Thyroid gland (tissue), 4 donors: ENCODE measurements at regions of chr12 and their contacts with region 1.

Region 1: GRCh38 chr12:91361864-91362263 is 179.2 kb upstream of the DCN start:
- DNase-seq: no peak
- H3K4me3 ChIP-seq: no peak overlapping the region
- H3K27ac ChIP-seq: no peak overlapping the region
- H3K4me1 ChIP-seq: no peaks in the 10 kb centered on the region
- H3K27me3 ChIP-seq: no peaks in the 10 kb centered on the region
- CTCF ChIP-seq: peak; percentile 39 to 70 (median 64)
- POLR2A ChIP-seq: no peak

Region 2: DNA sequence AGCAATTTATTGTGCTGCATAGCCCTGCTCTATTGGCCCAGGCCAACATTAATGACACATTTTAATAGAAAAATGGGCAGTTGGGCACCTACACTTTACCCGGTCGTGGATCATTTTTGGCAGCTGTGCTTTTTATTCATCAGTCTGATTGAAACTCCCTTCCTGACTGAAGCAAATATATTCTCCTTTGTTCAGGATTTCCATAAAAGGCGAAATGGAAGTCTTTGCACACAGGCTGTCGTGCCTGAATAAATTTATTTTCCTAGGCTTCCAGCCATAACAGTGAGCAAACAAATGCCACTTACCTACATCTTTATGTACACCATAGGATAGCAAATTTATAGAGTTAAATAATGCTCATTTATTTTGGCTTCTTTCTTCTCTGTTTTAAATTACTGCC is 301.4 kb after region 1 on chr12:
- intact Hi-C with region 1: no loop called
- DNase-seq: no peak
- H3K4me3 ChIP-seq: no peak overlapping the region
- H3K27ac ChIP-seq: no peak overlapping the region
- H3K4me1 ChIP-seq: no peaks in the 10 kb centered on the region
- H3K27me3 ChIP-seq: no peaks in the 10 kb centered on the region
- CTCF ChIP-seq: no peak
- POLR2A ChIP-seq: no peak

Region 3: GRCh38 chr12:92570056-92570753 is 1208.3 kb after region 1 on chr12:
- intact Hi-C with region 1: loop called (anchors 10 kb)
- DNase-seq: peak; percentile 56 to 57
- H3K4me3 ChIP-seq: no peak overlapping the region
- H3K27ac ChIP-seq: no peak overlapping the region
- H3K4me1 ChIP-seq: peaks cover 0 to 11% of the 10 kb centered on the region in 2 donors
- H3K27me3 ChIP-seq: no peaks in the 10 kb centered on the region
- CTCF ChIP-seq: peak in 5 of 6 experiments; percentile 48 to 95 (median 81)
- POLR2A ChIP-seq: no peak